Activated B cell treated with CpG ODN at 0.5 μM for 24 hours (primary cell): ENCODE measurements at regions of chr18 and their contacts with region 1.

Region 1: GRCh38 chr18:21004726-21005125 is 106.9 kb downstream of the ROCK1 start:
- DNase-seq: no peak
- ATAC-seq: no peak
- H3K4me3 Mint-ChIP-seq: no peak overlapping the region
- H3K27ac Mint-ChIP-seq: no peak overlapping the region
- H3K4me1 Mint-ChIP-seq: no peaks in the 10 kb centered on the region
- H3K27me3 Mint-ChIP-seq: no peaks in the 10 kb centered on the region
- CTCF ChIP-seq: no peak

Region 2: DNA sequence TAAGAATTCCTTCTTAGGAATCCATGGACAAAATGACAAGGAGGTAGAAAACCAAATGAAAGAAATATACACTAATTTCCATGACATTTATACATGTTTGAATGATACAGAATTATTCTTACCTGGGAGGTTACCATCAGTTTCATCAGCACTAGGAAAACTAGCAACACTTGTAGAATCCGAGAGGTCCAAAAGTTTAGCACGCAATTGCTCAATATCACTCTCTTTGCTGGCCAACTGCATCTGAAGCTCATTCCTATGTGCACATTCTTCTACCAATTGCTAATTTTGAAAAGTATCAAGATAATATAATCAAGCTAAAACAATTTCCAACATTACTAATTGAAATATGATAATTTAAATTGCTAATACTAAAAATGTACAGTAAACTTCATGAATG is 37.9 kb before region 1 on chr18:
- CTCF ChIA-PET with region 1: no interaction called
- POLR2A ChIA-PET with region 1: no interaction called
- intact Hi-C with region 1: loop called (anchors 5 kb)
- DNase-seq: no peak
- ATAC-seq: no peak
- H3K4me3 Mint-ChIP-seq: no peak overlapping the region
- H3K27ac Mint-ChIP-seq: no peak overlapping the region
- H3K4me1 Mint-ChIP-seq: no peaks in the 10 kb centered on the region
- H3K27me3 Mint-ChIP-seq: no peaks in the 10 kb centered on the region
- CTCF ChIP-seq: no peak

Region 3: DNA sequence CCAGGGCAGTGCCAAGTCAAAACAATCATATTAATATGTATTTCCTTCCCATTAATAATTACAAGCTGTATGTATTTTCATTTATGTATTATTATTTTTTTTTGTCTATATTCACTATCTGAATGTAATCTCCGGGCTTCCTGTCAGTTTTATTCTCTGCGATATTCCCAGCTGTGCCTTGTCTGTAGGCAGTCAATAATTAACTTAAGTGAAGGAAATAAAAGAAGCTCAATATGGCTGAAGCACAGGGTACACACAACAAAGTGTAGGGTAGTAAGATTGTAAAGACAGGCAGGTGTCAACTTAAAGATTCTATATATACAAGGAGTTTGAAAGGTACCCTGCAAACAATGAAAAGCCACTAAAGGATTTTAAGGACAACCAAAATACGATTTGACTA is 16.0 kb before region 1 on chr18:
- CTCF ChIA-PET with region 1: no interaction called
- POLR2A ChIA-PET with region 1: no interaction called
- intact Hi-C with region 1: loop called (anchors 2 kb)
- DNase-seq: no peak
- ATAC-seq: no peak
- H3K4me3 Mint-ChIP-seq: no peak overlapping the region
- H3K27ac Mint-ChIP-seq: no peak overlapping the region
- H3K4me1 Mint-ChIP-seq: no peaks in the 10 kb centered on the region
- H3K27me3 Mint-ChIP-seq: no peaks in the 10 kb centered on the region
- CTCF ChIP-seq: no peak

Region 4: GRCh38 chr18:21038201-21038600 is 33.5 kb after region 1 on chr18:
- CTCF ChIA-PET with region 1: no interaction called
- POLR2A ChIA-PET with region 1: no interaction called
- intact Hi-C with region 1: loop called (anchors 5 kb)
- DNase-seq: no peak
- ATAC-seq: no peak
- H3K4me3 Mint-ChIP-seq: no peak overlapping the region
- H3K27ac Mint-ChIP-seq: no peak overlapping the region
- H3K4me1 Mint-ChIP-seq: peaks cover 3% of the 10 kb centered on the region
- H3K27me3 Mint-ChIP-seq: no peaks in the 10 kb centered on the region
- CTCF ChIP-seq: no peak

Region 5: DNA sequence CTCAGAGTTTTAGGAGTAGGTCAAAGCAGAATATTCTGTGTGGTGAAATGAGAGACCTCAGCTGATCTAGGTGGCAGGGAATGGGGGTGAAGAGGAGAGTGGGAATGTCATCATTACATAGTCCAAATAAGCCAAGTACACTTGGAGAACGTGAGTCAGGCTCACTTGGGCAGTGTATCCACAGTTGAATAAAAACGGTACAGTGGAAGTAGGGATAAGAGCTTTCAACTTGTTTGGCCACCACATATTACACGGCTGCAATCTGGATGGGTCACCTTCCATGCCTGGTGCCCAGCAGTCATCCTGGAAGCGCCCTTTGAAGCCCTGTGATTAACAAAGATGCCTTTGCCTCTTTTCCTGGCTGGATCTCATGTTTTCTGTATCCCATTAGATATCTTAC is 764.5 kb after region 1 on chr18:
- CTCF ChIA-PET with region 1: no interaction called
- POLR2A ChIA-PET with region 1: no interaction called
- intact Hi-C with region 1: loop called (anchors 5 kb)
- DNase-seq: no peak
- ATAC-seq: no peak
- H3K4me3 Mint-ChIP-seq: no peak overlapping the region
- H3K27ac Mint-ChIP-seq: no peak overlapping the region
- H3K4me1 Mint-ChIP-seq: no peaks in the 10 kb centered on the region
- H3K27me3 Mint-ChIP-seq: no peaks in the 10 kb centered on the region
- CTCF ChIP-seq: no peak

Region 6: GRCh38 chr18:22185273-22185672 is 1180.5 kb after region 1 on chr18:
- CTCF ChIA-PET with region 1: no interaction called
- POLR2A ChIA-PET with region 1: no interaction called
- intact Hi-C with region 1: no loop called
- DNase-seq: no peak
- ATAC-seq: no peak
- H3K4me3 Mint-ChIP-seq: no peak overlapping the region
- H3K27ac Mint-ChIP-seq: no peak overlapping the region
- H3K4me1 Mint-ChIP-seq: no peaks in the 10 kb centered on the region
- H3K27me3 Mint-ChIP-seq: peaks cover 13% of the 10 kb centered on the region
- CTCF ChIP-seq: no peak